ENCODE measurements at regions of chr1 and their contacts with region 1.

Region 1: GRCh38 chr1:214328770-214329469 is 48.0 kb downstream of the SMYD2 start:
- DNase-seq: peak; percentile 78
- H3K4me3 ChIP-seq: no peak overlapping the region; a peak in 1 of 4 replicates
- H3K27ac ChIP-seq: no peak overlapping the region
- H3K4me1 ChIP-seq: peaks cover 0 to 7% of the 10 kb centered on the region in 2 experiments; a peak in 1 of 4 replicates
- H3K27me3 ChIP-seq: no peaks in the 10 kb centered on the region
- CTCF ChIP-seq: peak; percentile 92
- EP300 ChIP-seq: no peak
- RAD21 ChIP-seq: peak; percentile 97

Region 2: GRCh38 chr1:213244664-213245091 is 1084.2 kb before region 1 on chr1:
- CTCF ChIA-PET with region 1: interaction called, 10 read pairs
- POLR2A ChIA-PET with region 1: no interaction called
- DNase-seq: peak; percentile 16
- H3K4me3 ChIP-seq: no peak overlapping the region; a peak in 1 of 4 replicates
- H3K27ac ChIP-seq: no peak overlapping the region; a peak in 1 of 4 replicates
- H3K4me1 ChIP-seq: no peaks in the 10 kb centered on the region; a peak in 1 of 4 replicates
- H3K27me3 ChIP-seq: no peaks in the 10 kb centered on the region
- CTCF ChIP-seq: peak; percentile 90
- EP300 ChIP-seq: no peak
- RAD21 ChIP-seq: peak; percentile 85

Region 3: DNA sequence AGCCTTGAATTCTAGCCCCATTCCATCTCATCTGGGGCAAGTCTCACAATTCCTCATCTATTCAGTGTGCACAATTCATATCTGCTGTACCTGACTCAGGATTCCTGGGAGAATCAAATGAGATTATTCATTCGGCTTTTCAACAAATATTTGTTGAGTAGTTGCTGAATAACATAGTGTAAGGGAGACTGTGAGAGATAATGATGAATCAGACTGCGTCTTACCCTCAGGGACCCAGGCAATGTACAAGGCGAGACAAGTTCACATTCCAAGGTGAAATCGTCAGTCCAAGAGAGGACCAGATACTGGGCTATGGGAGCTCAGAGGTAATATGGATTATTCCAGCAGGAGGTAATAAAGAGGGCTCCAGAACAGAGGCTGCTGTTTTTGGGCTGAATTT is 115.8 kb before region 1 on chr1:
- CTCF ChIA-PET with region 1: interaction called, 250 read pairs
- POLR2A ChIA-PET with region 1: no interaction called
- DNase-seq: no peak
- H3K4me3 ChIP-seq: no peak overlapping the region
- H3K27ac ChIP-seq: no peak overlapping the region
- H3K4me1 ChIP-seq: peaks cover 0 to 3% of the 10 kb centered on the region in 2 experiments; a peak in 1 of 4 replicates
- H3K27me3 ChIP-seq: peaks cover 8% of the 10 kb centered on the region; the same call in 1 of the 2 replicates
- CTCF ChIP-seq: no peak
- EP300 ChIP-seq: no peak
- RAD21 ChIP-seq: no peak

Region 4: GRCh38 chr1:214261206-214262123 is 67.5 kb before region 1 on chr1:
- CTCF ChIA-PET with region 1: interaction called, 393 read pairs
- POLR2A ChIA-PET with region 1: interaction called, 6 read pairs
- DNase-seq: peak; percentile 72
- H3K4me3 ChIP-seq: peak overlapping the region; percentile 26 to 42; a peak in 3 of 4 replicates
- H3K27ac ChIP-seq: peak overlapping the region in 1 of 2 experiments; percentile 36; a peak in 2 of 4 replicates
- H3K4me1 ChIP-seq: peaks cover 8 to 10% of the 10 kb centered on the region in 2 experiments; a peak in 3 of 4 replicates
- H3K27me3 ChIP-seq: no peaks in the 10 kb centered on the region
- CTCF ChIP-seq: peak; percentile 98
- EP300 ChIP-seq: no peak
- RAD21 ChIP-seq: peak; percentile 91

Region 5: GRCh38 chr1:214316593-214316992 is 12.3 kb before region 1 on chr1:
- CTCF ChIA-PET with region 1: interaction called, 154 read pairs
- POLR2A ChIA-PET with region 1: interaction called, 3 read pairs
- DNase-seq: no peak
- H3K4me3 ChIP-seq: no peak overlapping the region
- H3K27ac ChIP-seq: no peak overlapping the region
- H3K4me1 ChIP-seq: peaks cover 0 to 5% of the 10 kb centered on the region in 2 experiments; a peak in 1 of 4 replicates
- H3K27me3 ChIP-seq: no peaks in the 10 kb centered on the region
- CTCF ChIP-seq: no peak
- EP300 ChIP-seq: no peak
- RAD21 ChIP-seq: no peak

Region 6: DNA sequence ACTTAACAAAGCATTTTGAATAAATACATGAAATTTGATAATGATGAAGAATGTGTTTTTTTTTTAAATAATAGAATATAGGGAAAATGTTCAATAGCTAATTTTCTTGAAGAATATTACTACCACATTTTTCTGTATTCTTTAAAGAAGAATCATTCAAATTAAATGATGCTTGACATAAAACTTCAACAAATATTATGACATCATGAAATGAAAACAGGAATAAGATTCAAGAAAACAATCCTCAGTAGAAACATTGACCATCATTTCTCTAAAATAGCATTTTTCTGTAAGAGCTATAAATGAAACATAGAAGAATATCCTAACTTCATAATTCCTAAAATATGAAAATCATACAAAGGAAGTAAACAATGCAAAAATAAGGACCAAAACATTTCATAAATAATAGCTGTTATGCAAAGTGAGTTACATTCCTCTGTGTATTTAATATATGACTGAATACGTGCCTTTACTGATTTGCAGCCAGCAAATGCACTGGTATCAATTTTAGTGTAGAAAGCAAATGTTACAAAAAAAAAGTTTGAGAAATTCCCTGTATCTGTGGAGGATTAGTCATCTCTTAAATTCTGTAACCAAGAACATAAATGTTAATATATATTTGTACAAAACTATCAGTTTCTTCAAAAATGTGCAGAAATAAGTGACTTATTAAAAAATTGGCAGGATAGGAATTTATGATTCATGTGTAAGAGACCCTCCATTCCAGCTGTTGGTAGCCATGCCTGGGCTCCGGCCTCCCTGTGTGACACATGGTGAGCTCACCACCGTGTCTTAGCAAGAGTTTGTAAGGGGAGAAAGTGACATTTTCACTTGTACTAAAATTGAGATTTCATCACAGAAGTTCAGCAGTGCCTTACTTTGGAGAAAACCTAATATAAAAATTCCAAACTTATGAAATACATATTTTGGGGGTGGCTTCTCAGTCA is 237.5 kb after region 1 on chr1:
- CTCF ChIA-PET with region 1: interaction called, 21 read pairs
- POLR2A ChIA-PET with region 1: no interaction called
- DNase-seq: no peak
- H3K4me3 ChIP-seq: no peak overlapping the region
- H3K27ac ChIP-seq: peak overlapping the region in 1 of 2 experiments; percentile 75; a peak in 2 of 4 replicates
- H3K4me1 ChIP-seq: peaks cover 2 to 34% of the 10 kb centered on the region in 2 experiments
- H3K27me3 ChIP-seq: no peaks in the 10 kb centered on the region
- CTCF ChIP-seq: no peak
- EP300 ChIP-seq: peak in 1 of 2 experiments; percentile 74; a peak in 2 of 4 replicates
- RAD21 ChIP-seq: no peak

Region 7: GRCh38 chr1:214602764-214603657 is 274.1 kb after region 1 on chr1 and contains the start of gene CENPF:
- CTCF ChIA-PET with region 1: interaction called, 10 read pairs
- POLR2A ChIA-PET with region 1: no interaction called
- DNase-seq: peak; percentile 97
- H3K4me3 ChIP-seq: peak within 1 kb of the TSS; percentile 87 to 92
- H3K27ac ChIP-seq: peak within 1 kb of the TSS; percentile 58 to 83
- H3K4me1 ChIP-seq: peaks cover 0 to 16% of the 10 kb centered on the region in 2 experiments; a peak in 3 of 4 replicates
- H3K27me3 ChIP-seq: no peaks in the 10 kb centered on the region
- CTCF ChIP-seq: peak; percentile 21; the same call in 1 of the 2 replicates
- EP300 ChIP-seq: peak in 1 of 2 experiments; percentile 25; a peak in 1 of 4 replicates
- RAD21 ChIP-seq: no peak
- polyA plus RNA-seq, gene CENPF: 14.5 and 14.9 TPM in 2 replicates